Activated CD8-positive, alpha-beta memory T cell treated with anti-CD3 and anti-CD28 coated beads, Interleukin-2, amount 10 ng/mL, durations not matched to agents 7 days and 5 days (primary cell): ENCODE measurements at regions of chr5 and their contacts with region 1.

Region 1: GRCh38 chr5:39547553-39548154 is 122.9 kb upstream of the DAB2 start:
- DNase-seq: no peak
- ATAC-seq: no peak
- H3K4me3 Mint-ChIP-seq: no peak overlapping the region
- H3K27ac Mint-ChIP-seq: no peak overlapping the region
- H3K4me1 Mint-ChIP-seq: peaks cover 6% of the 10 kb centered on the region
- H3K27me3 Mint-ChIP-seq: peaks cover 17% of the 10 kb centered on the region

Region 2: GRCh38 chr5:39194466-39195136 is 353.1 kb before region 1 on chr5:
- CTCF ChIA-PET with region 1: no interaction called
- DNase-seq: peak; percentile 55
- ATAC-seq: peak; percentile 16
- H3K4me3 Mint-ChIP-seq: peak overlapping the region; percentile 74
- H3K27ac Mint-ChIP-seq: peak overlapping the region; percentile 79
- H3K4me1 Mint-ChIP-seq: peaks cover 74% of the 10 kb centered on the region
- H3K27me3 Mint-ChIP-seq: no peaks in the 10 kb centered on the region

Region 3: DNA sequence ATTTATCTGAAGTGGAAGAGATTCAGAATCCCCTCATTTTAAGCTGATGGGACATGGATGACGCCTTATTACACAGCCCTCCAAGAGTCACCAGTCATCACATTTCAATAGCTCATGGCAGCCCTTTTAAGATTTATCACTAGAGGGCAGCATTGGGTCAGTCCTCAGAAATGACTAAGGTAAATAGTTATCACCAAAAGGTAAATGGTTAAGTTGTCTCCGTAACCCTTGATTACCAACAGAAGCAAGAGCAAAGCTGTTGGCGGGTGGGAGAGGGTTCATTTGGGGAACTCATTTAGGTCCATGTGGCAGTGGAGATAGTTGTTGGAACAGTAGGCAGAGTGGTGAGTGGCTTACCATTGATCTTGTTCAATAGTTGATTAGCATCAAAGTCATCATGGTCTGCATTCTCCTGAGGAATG is 171.3 kb before region 1 on chr5:
- CTCF ChIA-PET with region 1: interaction called, 64 read pairs
- DNase-seq: peak; percentile 45
- ATAC-seq: peak; percentile 57
- H3K4me3 Mint-ChIP-seq: no peak overlapping the region
- H3K27ac Mint-ChIP-seq: no peak overlapping the region
- H3K4me1 Mint-ChIP-seq: no peaks in the 10 kb centered on the region
- H3K27me3 Mint-ChIP-seq: peaks cover 28% of the 10 kb centered on the region